ENCODE measurements at regions of chr22 and their contacts with region 1.

Region 1: GRCh38 chr22:50326959-50327710 is at the start of gene DENND6B:
- H3K4me3 Mint-ChIP-seq: peak within 1 kb of the TSS; percentile 82
- H3K27ac Mint-ChIP-seq: peak within 1 kb of the TSS; percentile 92
- H3K4me1 Mint-ChIP-seq: peaks cover 16% of the 10 kb centered on the region
- H3K27me3 Mint-ChIP-seq: peaks cover 33% of the 10 kb centered on the region

Region 2: GRCh38 chr22:50293441-50294318 is 33.5 kb before region 1 on chr22:
- intact Hi-C with region 1: loop called (anchors 5 kb)
- H3K4me3 Mint-ChIP-seq: peak overlapping the region; percentile 44
- H3K27ac Mint-ChIP-seq: peak overlapping the region; percentile 20
- H3K4me1 Mint-ChIP-seq: peaks cover 82% of the 10 kb centered on the region
- H3K27me3 Mint-ChIP-seq: no peaks in the 10 kb centered on the region

Region 3: DNA sequence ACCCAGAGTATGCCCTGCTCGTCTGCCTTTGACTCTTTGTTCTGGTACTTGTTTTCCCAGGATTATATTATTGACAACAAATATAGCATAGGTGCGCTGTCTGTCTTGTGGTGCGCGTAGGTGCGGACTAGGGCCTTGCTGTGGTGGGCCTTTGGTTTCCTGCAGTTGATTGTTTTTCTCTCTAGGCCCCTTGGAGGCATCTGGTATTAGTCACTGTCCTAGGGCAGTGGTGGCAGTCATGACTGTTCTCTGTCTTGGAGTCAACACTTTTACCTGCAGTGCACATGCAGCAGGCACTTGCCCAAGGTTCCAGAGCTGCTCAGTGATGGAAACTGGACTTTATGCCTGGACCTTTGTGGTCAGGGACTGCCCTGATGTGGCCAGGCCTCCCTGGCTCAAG is 34.6 kb after region 1 on chr22:
- intact Hi-C with region 1: no loop called
- H3K4me3 Mint-ChIP-seq: no peak overlapping the region
- H3K27ac Mint-ChIP-seq: peak overlapping the region; percentile 28
- H3K4me1 Mint-ChIP-seq: peaks cover 46% of the 10 kb centered on the region
- H3K27me3 Mint-ChIP-seq: no peaks in the 10 kb centered on the region

Region 4: GRCh38 chr22:50713571-50714056 is 386.5 kb after region 1 on chr22:
- intact Hi-C with region 1: no loop called
- H3K4me3 Mint-ChIP-seq: no peak overlapping the region
- H3K27ac Mint-ChIP-seq: no peak overlapping the region
- H3K4me1 Mint-ChIP-seq: no peaks in the 10 kb centered on the region
- H3K27me3 Mint-ChIP-seq: no peaks in the 10 kb centered on the region

Measured in dendritic cell treated with granulocyte-macrophage colony-stimulating factor and Interleukin-4, amounts not matched to agents 40 ng/mL and 50 ng/mL, for 4 days (primary cell).